ENCODE measurements at regions of chr17 and their contacts with region 1.

Region 1: DNA sequence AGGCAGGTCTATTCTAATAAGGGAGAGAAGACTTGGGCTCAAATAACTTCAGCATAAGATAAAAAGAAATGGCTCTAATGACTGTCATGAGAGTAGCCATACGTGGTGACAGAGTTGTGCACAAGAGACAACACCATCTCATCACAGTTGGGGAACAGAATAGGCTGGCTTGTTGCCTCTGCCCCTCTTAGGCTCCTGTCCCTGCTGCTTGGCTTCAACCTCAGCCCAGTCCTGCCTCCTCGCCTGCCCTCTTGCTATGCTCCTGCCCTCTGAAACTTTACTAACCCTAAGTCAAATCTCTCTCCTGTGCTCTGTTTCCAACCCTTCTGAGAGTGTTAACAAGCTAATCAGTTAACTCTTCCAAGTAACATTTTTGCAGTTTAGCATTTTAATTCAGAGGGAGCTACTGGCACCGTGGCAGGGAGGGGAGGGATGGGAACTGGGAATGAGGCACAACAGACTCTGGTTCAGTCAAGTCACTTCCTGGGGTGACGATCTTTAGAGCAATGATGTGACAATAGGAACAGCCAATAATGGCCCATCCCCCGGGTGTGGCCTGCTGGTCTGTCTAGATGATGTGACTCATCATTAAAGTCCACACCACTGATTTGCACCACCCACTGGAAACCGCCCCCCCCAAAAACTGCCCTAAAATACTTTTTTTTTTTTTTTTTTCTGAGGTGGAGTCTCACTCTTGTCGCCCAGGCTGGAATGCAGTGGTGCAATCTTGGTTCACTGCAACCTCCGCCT is 35.5 kb downstream of the DNAH17 start:
- DNase-seq: no peak
- H3K4me3 ChIP-seq: no peak overlapping the region
- H3K4me3 Mint-ChIP-seq: no peak overlapping the region
- H3K27ac Mint-ChIP-seq: no peak overlapping the region
- H3K4me1 ChIP-seq: no peaks in the 10 kb centered on the region
- H3K4me1 Mint-ChIP-seq: no peaks in the 10 kb centered on the region
- H3K27me3 ChIP-seq: no peaks in the 10 kb centered on the region
- H3K27me3 Mint-ChIP-seq: peaks cover 3% of the 10 kb centered on the region
- CTCF ChIP-seq: no peak

Region 2: GRCh38 chr17:78583091-78583490 is 41.4 kb after region 1 on chr17:
- CTCF ChIA-PET with region 1: no interaction called
- POLR2A ChIA-PET with region 1: interaction called, 15 read pairs
- intact Hi-C with region 1: no loop called
- DNase-seq: peak in 1 of 2 experiments; percentile 34
- H3K4me3 ChIP-seq: no peak overlapping the region
- H3K4me3 Mint-ChIP-seq: no peak overlapping the region
- H3K27ac Mint-ChIP-seq: no peak overlapping the region
- H3K4me1 ChIP-seq: no peaks in the 10 kb centered on the region
- H3K4me1 Mint-ChIP-seq: no peaks in the 10 kb centered on the region
- H3K27me3 ChIP-seq: no peaks in the 10 kb centered on the region; the same call in 1 of the 2 replicates
- H3K27me3 Mint-ChIP-seq: peaks cover 7% of the 10 kb centered on the region
- CTCF ChIP-seq: no peak